Spleen (tissue), 13 donors: ENCODE measurements at regions of chr12 and their contacts with region 1.

Region 1: GRCh38 chr12:114508529-114509129 is 102.7 kb upstream of the TBX5 start:
- DNase-seq: no peak
- H3K4me3 ChIP-seq: no peak overlapping the region
- H3K27ac ChIP-seq: no peak overlapping the region
- H3K4me1 ChIP-seq: peaks cover 0 to 3% (median 0%) of the 10 kb centered on the region in 6 donors
- H3K27me3 ChIP-seq: peaks cover 0 to 43% (median 0%) of the 10 kb centered on the region in 7 donors
- CTCF ChIP-seq: peak; percentile 28 to 74 (median 59)
- POLR2A ChIP-seq: no peak

Region 2: DNA sequence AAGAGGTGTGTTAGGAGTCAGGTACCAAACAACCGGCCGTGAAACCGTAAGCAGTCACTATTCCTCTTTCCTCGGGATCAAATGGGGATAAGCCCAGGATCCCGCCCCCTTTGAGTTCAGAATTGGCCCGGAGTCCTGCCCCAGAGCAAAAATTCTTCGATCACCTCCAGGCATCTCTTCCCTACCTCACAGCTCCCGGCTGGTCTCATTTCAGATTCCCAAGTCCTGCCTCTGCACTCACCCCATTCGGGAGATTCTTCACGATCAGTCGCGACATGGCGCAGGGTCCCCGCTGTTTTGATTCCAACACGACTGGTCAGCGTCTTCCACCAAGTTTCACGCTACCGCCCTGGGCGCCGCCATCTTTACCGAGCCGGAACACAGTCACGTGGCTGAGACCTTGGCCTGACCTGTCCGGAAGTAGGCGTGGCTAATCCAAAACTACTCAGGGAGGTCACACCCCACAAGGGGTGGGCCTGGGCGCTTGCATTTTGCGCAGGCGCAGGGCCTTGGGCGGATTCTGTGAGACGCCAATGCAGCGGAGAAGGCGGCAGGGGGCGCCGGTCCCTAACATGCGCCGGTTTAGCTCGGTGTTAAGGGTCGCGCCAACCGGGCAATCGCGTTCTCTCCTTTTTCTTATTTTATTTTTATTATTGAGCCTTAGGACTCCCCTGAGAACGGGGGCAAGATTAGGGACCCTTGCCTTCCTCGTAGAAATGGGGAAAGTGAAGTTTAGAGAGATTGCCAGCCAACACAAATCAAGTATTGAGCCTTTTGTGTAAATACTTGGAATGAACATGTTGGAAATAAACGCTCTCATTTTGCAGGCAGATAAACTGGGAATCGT is 542.5 kb before region 1 on chr12 and contains the start of gene RBM19:
- intact Hi-C with region 1: loop called (anchors 5 kb)
- DNase-seq: peak; percentile 99
- H3K4me3 ChIP-seq: peak within 1 kb of the TSS; percentile 74 to 93 (median 78)
- H3K27ac ChIP-seq: peak within 1 kb of the TSS; percentile 22 to 79 (median 55)
- H3K4me1 ChIP-seq: peaks cover 16 to 58% (median 31%) of the 10 kb centered on the region in 6 donors
- H3K27me3 ChIP-seq: no peaks in the 10 kb centered on the region
- CTCF ChIP-seq: peak; percentile 83 to 100 (median 97)
- POLR2A ChIP-seq: no peak
- total RNA-seq, gene RBM19: 29.1 to 46.7 (median 34.8) TPM

Region 3: DNA sequence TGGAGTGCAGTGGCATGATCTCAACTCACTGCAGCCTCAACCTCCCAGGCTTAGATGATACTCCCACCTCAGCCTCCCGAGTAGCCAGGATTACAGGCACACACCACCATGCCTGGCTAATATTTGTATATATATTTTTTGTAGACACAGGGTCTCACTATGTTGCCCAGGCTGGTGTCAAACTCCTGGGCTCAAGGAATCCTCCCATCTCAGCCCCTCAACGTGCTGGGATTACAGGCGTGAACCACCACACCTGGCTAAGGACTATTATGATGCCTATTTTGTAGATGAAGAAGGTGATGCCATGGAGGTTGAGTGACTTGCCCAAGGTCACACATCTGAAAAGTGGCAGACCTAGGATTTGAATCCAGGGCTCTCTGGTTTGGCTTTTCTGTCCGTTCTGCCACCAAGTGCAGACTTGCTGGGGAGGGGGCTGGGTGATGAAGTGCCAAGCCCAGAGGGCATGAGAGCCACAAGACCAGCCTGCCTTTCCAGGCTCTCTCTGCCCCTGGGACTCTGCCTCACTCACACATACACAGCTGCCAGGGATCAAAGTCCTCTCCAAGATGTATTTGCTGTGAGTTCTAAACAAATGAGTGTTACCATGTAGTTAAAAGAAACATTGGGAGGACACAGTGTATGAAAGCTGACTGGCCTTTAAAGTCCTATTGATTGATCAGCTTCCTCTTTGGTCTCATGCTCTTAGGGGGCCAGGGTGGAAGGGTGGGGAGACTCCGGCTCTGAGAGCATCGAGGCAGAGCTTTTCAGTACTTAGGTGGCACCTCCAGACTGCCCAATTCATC is 521.2 kb before region 1 on chr12:
- intact Hi-C with region 1: loop called (anchors 5 kb)
- DNase-seq: no peak
- H3K4me3 ChIP-seq: no peak overlapping the region
- H3K27ac ChIP-seq: no peak overlapping the region
- H3K4me1 ChIP-seq: no peaks in the 10 kb centered on the region
- H3K27me3 ChIP-seq: peaks cover 0 to 46% (median 0%) of the 10 kb centered on the region in 7 donors
- CTCF ChIP-seq: no peak
- POLR2A ChIP-seq: no peak